ENCODE measurements at regions of chr16 and their contacts with region 1.

Region 1: DNA sequence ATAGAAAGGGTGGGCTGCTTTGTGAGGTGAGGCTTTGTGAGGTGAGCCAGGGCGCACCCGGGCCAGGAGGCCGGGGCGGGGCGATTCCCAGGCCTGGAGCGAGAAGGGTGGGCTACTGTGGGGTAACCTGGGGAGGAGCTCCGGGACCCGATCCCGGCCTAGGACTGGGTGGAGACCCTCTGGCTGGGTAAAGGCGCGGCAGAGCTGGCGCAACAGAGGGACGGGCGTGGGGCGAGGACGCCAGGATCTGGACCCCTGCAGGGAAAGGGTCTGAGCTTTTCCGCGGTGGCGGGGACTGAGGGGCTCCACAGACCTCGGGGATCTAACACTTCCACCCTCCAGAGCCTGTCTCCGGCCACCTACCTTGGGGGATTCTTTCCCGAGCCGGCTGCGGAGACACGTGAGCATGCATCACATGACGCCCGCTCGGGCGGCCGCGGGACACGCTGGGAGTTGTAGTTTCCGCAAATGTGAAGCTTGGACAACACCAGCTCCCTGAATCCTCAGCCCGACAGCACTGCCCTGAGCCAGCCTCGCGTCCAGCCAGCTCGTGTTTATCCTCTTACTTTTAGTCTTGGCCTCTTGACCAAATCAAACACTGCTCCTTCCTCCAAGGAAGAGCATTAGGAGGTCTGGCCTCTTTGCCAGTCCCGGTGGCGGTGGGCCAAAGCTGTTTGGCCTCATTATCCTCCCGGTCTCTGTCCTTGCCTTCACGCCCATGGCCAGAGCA is at the start of gene SLC38A7:
- DNase-seq: peak; percentile 92
- total RNA-seq, gene SLC38A7: 26.9 TPM

Region 2: GRCh38 chr16:58392215-58393137 is 292.0 kb before region 1 on chr16 and contains the start of gene GINS3:
- intact Hi-C with region 1: no loop called
- DNase-seq: peak; percentile 93
- total RNA-seq, gene GINS3: 4.7 TPM

Region 3: DNA sequence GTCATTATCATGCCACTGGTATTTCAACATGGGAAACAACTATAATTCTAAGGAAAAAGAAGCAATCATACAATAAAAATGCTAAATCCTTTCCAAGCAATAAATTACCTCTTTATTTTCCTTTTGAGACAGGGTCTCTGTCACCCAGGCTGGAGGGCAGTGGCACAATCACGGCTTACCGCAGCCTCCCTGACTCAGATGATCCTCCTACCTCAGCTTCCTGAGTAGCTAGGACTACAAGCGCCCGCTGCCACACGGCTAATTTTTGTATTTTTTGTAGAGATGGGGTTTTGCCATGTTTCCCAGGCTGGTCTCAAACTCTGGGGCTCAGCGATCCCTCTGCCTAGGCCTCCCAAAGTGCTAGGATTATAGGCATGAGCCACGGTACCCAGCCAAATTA is 79.0 kb before region 1 on chr16:
- intact Hi-C with region 1: no loop called
- DNase-seq: no peak

Region 4: GRCh38 chr16:58699151-58699550 is 14.6 kb after region 1 on chr16:
- intact Hi-C with region 1: loop called (anchors 1 kb)
- DNase-seq: no peak

Region 5: GRCh38 chr16:59400830-59401229 is 716.3 kb after region 1 on chr16:
- intact Hi-C with region 1: no loop called
- DNase-seq: no peak

Measured in cardiac septum (tissue), 1 donor.